ENCODE measurements at regions of chr19 and their contacts with region 1.

Region 1: GRCh38 chr19:18588611-18589379 is at the start of gene REX1BD:
- DNase-seq: peak; percentile 55 to 76
- ATAC-seq: peak; percentile 81
- H3K4me3 ChIP-seq: peak within 1 kb of the TSS; percentile 67 to 100 (median 88)
- H3K27ac ChIP-seq: peak within 1 kb of the TSS; percentile 84 to 96 (median 94)
- H3K4me1 ChIP-seq: peaks cover 17 to 19% of the 10 kb centered on the region in 2 donors
- H3K27me3 ChIP-seq: no peaks in the 10 kb centered on the region
- CTCF ChIP-seq: peak; percentile 85 to 94 (median 89)
- POLR2A ChIP-seq: peak; percentile 34 to 52
- total RNA-seq, gene REX1BD: 163 to 337 (median 187) TPM

Region 2: DNA sequence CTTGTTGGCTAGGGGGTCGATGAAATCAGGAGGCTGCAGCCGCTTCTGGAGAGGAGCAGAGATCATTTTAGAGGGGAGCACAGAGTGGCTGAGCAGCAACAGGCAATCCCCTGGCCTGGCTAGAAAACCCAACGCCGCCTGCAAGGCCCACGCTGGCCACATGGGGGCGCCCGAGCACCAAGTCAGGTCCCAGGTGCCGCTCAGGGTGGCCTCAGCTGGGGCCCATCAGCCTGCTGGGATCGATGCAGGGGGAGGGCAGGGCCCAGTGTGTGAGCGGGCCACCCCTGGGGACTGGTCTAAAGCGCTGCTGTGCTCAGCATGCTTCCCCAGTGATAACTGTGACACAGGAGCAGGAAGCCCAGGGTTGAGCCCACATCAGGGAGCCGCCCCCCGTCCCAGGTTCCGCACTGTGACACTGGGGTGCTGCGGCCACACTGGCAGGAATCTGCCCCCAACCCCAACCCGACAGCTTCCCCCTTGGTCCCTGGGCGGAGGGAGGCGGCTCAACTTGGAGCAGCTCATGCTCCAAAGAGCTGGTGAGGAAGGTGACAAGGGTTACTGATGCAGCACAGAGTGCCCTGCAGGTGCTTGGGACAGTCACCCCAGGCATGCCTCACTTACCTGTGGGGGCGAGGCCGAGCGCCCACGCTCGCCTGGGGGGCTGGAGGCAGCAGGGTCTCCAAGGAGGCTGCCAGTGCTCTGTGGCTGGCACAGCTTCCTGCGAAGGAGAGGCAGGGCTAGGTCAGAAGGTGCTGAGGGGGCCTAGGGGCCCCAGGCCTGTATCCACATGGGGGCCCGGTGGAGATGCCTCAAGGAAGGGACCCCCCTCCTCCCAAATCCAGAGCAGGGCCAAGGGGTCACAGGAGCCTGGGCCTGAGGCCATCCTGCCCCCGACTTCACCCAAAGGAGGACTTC is 137.6 kb before region 1 on chr19:
- in situ Hi-C with region 1: no loop called
- intact Hi-C with region 1: loop called (anchors 2 kb)
- DNase-seq: peak; percentile 56 to 80
- ATAC-seq: peak; percentile 73 to 83
- H3K4me3 ChIP-seq: no peak overlapping the region
- H3K27ac ChIP-seq: peak overlapping the region in 3 of 4 donors; percentile 18 to 28 (median 20)
- H3K4me1 ChIP-seq: peaks cover 6 to 16% of the 10 kb centered on the region in 2 donors
- H3K27me3 ChIP-seq: no peaks in the 10 kb centered on the region
- CTCF ChIP-seq: peak; percentile 97 to 99 (median 98)
- POLR2A ChIP-seq: no peak

Region 3: DNA sequence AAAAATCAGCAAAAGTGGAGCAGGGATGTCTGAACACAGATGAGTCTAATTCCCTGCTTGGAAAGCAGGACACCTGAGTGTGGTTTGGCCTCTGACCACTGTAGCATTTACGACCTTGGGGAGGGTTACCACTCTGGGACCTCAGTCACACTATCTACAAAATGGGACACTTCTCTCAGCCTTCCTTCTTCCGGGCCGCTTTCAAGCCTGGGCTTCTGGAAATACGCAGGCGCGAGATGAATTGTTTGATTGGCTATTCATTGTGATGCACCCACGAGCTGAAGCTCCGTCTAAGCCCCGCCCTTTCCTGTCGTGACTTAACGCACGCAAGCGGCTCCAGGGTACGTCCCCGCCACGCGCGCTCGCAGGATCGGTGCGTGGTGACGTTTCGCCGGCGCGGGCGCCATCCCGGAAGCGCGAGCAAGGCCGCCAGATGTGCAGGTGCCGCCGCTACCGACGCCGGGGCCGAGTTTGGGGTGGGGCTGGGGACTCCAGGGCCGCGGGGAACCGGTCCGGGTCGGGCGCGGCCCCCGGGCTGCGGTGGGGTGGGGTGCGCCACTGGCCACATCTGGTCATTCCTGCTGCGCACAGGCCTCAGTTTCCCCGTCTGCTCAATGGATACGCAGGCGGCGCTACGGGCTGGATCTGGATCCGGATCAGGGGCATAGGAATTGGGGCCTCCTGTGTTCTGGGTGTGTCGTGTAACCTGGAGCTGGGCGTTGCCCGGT is 31.2 kb before region 1 on chr19 and contains the start of gene KXD1:
- in situ Hi-C with region 1: no loop called
- intact Hi-C with region 1: no loop called
- DNase-seq: peak; percentile 98
- ATAC-seq: peak; percentile 99 to 100
- H3K4me3 ChIP-seq: peak within 1 kb of the TSS; percentile 82 to 91 (median 88)
- H3K27ac ChIP-seq: peak within 1 kb of the TSS; percentile 95 to 98 (median 96)
- H3K4me1 ChIP-seq: peaks cover 0 to 17% of the 10 kb centered on the region in 2 donors
- H3K27me3 ChIP-seq: no peaks in the 10 kb centered on the region
- CTCF ChIP-seq: no peak
- POLR2A ChIP-seq: peak; percentile 86 to 92
- total RNA-seq, gene KXD1: 97.1 to 155 (median 106) TPM

Region 4: DNA sequence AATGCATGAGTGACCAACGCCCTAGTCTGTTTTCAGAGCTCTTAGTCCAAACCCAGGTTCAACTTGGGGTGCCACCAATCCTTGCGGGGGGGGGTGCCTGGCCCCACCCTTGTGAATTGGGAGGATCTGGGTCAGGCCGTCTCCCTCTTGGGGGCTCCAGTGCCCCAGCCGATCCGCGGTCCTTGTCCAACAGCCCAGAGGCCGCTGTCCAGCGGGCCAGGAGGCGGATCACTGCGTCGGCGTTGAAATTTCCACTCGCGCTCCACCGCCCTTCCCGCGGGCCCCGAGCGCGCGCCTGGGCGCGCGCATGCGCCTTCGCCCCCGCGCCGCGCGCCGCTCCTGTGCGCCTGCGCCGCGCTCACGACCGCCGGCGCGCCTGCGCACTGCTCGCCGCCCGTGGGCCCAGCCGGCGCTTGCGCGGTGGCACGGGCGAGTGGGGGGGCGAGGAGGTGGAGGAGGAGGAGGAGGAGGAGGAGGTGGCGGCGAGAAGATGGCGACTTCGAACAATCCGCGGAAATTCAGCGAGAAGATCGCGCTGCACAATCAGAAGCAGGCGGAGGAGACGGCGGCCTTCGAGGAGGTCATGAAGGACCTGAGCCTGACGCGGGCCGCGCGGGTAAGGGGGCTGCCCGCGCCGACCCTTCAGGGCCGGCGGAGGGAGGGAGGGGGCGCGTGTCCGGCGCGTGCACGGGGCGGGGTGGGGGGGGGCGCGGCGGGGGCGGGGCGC is 94.6 kb after region 1 on chr19 and contains the start of gene CRTC1:
- in situ Hi-C with region 1: loop called in 1 of 4 experiments (anchors 10 kb)
- intact Hi-C with region 1: loop called (anchors 2 kb)
- DNase-seq: peak; percentile 76 to 87
- ATAC-seq: peak; percentile 91 to 93
- H3K4me3 ChIP-seq: peak within 1 kb of the TSS; percentile 52 to 65 (median 58)
- H3K27ac ChIP-seq: peak within 1 kb of the TSS; percentile 87 to 93 (median 90)
- H3K4me1 ChIP-seq: peaks cover 11 to 19% of the 10 kb centered on the region in 2 donors
- H3K27me3 ChIP-seq: no peaks in the 10 kb centered on the region
- CTCF ChIP-seq: no peak
- POLR2A ChIP-seq: peak; percentile 69 to 79
- total RNA-seq, gene CRTC1: 2.8 to 8.8 (median 3.7) TPM

Region 5: DNA sequence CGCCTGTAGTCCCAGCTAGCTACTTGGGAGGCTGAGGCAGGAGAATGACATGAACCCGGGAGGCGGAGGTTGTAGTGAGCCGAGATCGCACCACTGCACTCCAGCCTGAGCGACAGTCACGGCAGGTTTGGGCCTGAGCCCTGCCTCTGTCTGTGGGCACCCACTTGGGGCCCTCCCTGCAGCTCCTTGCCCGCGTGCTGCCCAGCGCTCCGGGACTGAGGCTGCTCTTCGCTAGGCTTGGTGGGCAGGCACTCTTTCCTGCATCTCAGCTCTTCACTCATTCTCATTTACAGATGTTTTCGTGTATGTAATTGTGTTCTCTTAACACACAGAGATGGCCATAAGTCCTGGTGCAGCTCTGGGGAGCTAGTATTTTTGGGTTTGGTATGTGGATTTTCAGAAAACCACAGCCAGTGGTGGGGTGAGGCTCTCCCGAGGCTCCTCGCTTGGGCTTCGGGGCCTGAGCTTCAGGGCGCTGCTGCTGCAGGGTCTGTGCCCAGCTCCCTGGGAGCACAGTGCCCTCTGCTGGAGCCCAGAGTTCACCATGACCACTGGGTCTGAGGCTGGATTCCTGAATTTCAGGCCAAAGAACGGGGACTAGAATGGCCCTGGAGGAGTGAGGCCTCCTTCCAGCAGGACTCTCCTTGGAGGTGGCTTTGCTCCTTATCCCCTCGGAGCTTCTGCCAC is 258.2 kb after region 1 on chr19:
- in situ Hi-C with region 1: loop called (anchors 10 to 25 kb)
- intact Hi-C with region 1: no loop called
- DNase-seq: peak; percentile 44 to 67
- ATAC-seq: peak; percentile 59 to 77
- H3K4me3 ChIP-seq: no peak overlapping the region
- H3K27ac ChIP-seq: peak overlapping the region in 3 of 4 donors; percentile 65 to 80 (median 67)
- H3K4me1 ChIP-seq: peaks cover 49 to 53% of the 10 kb centered on the region in 2 donors
- H3K27me3 ChIP-seq: no peaks in the 10 kb centered on the region
- CTCF ChIP-seq: peak; percentile 71 to 90 (median 83)
- POLR2A ChIP-seq: no peak

Region 6: DNA sequence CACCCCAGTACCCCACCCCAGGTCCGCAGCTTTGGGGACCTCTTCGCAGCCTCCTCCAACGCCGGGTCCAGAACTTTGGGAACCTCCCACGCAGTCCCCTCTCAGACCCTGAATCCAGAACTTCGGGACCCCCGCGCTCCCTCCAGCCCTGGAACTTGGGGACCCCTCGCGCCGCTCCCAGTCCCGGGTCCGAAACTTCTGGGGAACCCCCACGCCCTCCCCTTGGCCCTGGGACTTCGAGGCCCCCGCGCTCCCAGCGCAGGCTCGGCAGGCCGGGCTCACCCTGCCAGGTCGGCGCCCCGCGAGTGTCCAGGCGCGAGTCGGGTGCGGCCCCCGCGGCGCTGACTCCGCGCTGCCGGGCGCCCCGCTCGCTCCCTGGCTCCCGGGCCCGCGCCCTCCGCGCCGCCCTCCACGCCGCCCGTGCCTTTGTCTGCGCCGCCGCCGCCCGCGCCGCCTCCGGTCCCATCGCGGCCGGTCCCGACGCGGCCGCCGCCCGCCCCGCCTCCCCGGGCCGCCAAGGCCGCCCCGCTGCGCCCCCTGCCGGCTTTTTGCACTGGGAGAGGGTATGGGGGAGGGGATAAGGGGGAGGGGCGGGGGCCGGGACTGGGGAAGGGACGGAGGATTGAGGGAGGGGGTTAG is 352.1 kb after region 1 on chr19 and contains the start of gene HOMER3:
- in situ Hi-C with region 1: no loop called
- intact Hi-C with region 1: loop called (anchors 5 kb)
- DNase-seq: peak; percentile 57 to 74
- ATAC-seq: peak; percentile 67 to 78
- H3K4me3 ChIP-seq: peak within 1 kb of the TSS; percentile 67 to 93 (median 78)
- H3K27ac ChIP-seq: peak within 1 kb of the TSS; percentile 87 to 98 (median 94)
- H3K4me1 ChIP-seq: peaks cover 12 to 18% of the 10 kb centered on the region in 2 donors
- H3K27me3 ChIP-seq: no peaks in the 10 kb centered on the region
- CTCF ChIP-seq: peak in 2 of 5 experiments; percentile 42 to 65
- POLR2A ChIP-seq: peak; percentile 61 to 70
- total RNA-seq, gene HOMER3: 86.2 to 202 (median 113) TPM

Measured in gastrocnemius medialis (tissue), 4 donors.